ENCODE measurements at regions of chr5 and their contacts with region 1.

Region 1: DNA sequence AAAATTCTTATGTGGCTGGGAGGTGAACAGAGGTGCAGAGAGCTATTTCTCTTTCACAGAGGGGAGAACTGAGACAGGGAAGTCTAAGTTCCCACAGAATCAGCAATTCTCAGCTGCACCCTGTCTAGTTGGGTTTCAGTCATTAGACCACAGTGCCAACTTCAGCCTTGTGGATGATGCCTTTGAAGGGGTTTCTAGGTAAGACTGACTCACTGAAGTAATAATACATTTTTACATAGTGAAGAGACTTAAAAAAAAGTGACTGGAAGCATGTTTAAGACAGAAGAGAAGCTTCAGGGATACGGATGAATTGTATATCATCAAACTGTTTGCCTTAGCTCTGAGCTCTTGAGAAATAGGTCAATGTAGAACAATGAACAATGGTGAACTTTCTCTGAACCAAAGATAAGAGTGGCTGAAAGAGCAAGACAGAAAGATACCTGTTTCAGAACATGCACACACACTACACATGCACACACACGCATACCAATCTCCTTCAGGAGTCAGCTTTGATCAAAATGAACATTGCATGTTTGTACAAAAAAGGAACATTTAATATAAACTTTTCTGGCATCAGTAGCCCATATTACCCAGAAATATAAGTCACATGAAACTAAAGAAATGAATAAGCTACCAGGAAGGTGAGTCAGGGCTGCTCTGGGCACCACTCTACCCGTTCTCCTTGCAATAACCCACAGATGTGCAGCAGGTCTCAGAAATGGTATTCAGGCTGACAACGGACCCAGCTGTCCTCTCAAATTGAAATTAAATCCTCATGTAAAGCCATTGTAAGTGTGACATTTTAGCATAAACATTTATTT is 12.6 kb upstream of the FYB1 start:
- DNase-seq: peak; percentile 81
- ATAC-seq: peak; percentile 95
- H3K4me3 Mint-ChIP-seq: peak overlapping the region; percentile 52
- H3K27ac Mint-ChIP-seq: peak overlapping the region; percentile 92
- H3K4me1 Mint-ChIP-seq: peaks cover 21% of the 10 kb centered on the region
- H3K27me3 Mint-ChIP-seq: no peaks in the 10 kb centered on the region
- CTCF ChIP-seq: no peak

Region 2: DNA sequence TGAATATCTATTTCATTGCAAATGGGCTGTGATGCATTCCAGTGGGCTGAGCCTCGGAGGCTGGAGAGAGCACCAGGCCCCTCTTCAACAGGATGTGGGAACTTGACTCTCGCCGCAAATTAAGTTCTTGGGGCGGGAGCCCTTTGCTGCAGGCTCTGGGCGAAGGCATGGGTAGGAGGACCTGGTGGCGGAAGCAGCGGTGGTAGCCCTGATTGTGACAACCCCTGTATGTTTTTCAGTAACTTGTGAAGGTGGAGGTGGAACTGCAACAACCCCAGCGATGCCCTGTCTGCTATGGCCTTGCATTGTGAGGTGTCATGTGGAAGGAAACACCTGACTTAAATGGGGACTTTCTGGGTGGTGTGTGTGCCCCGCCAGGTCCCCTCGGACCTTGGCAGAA is 22.0 kb before region 1 on chr5:
- CTCF ChIA-PET with region 1: interaction called, 5 read pairs
- POLR2A ChIA-PET with region 1: interaction called, 13 read pairs
- intact Hi-C with region 1: no loop called
- DNase-seq: peak; percentile 91
- ATAC-seq: peak; percentile 74
- H3K4me3 Mint-ChIP-seq: peak overlapping the region; percentile 71
- H3K27ac Mint-ChIP-seq: peak overlapping the region; percentile 94
- H3K4me1 Mint-ChIP-seq: peaks cover 87% of the 10 kb centered on the region
- H3K27me3 Mint-ChIP-seq: no peaks in the 10 kb centered on the region
- CTCF ChIP-seq: no peak

Measured in activated CD8-positive, alpha-beta T cell treated with anti-CD3 and anti-CD28 coated beads for 36 hours (primary cell).